ENCODE measurements at regions of chr2 and their contacts with region 1.

Region 1: GRCh38 chr2:42117923-42118753 is 51.0 kb upstream of the EML4 start:
- DNase-seq: no peak
- H3K4me3 Mint-ChIP-seq: peak overlapping the region; percentile 6
- H3K27ac Mint-ChIP-seq: peak overlapping the region; percentile 23
- H3K4me1 Mint-ChIP-seq: peaks cover 30% of the 10 kb centered on the region
- H3K27me3 Mint-ChIP-seq: peaks cover 2% of the 10 kb centered on the region

Region 2: DNA sequence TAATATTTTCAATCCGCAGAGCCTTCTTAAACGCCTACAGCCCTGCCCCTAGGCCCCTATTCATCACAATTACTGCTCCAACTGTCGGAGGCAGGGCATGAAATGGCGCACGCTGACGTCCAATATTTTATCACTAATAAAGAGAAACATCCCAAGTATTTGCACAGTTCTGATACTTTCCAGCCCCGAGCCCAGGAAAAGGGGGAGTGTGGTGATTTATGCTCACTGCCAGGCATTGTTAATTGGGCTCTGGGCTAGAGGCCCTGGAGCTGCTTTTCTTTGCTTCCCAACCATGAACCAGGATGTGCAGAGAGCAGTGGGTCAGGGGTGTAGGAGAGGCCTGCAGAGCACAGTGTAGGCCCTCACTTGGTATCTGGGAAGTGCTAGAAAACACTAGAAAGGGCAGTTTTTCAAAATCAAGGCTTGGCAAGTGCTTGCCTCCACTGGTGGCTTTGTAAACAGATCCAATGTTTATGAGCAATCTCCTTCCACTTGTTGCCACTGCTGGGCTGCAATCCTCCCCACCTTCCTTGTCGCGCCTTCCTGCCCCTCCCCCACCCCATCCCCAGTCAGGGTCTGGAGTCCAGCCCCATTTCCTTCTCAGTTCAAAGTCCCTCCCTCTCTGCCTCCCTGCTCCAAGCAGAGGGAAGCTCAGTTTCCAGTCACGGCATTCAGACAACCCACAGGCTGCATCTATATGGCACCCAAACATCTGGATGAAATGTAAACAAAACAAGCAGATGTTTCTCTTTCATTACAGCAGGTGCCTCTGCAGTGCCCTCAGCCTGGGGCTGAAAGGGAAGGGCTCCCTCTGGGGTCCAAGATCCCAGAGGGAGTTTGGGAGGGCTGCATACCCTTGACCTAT is 154.2 kb before region 1 on chr2:
- intact Hi-C with region 1: no loop called
- DNase-seq: no peak
- H3K4me3 Mint-ChIP-seq: no peak overlapping the region
- H3K27ac Mint-ChIP-seq: no peak overlapping the region
- H3K4me1 Mint-ChIP-seq: no peaks in the 10 kb centered on the region
- H3K27me3 Mint-ChIP-seq: peaks cover 11% of the 10 kb centered on the region

Region 3: GRCh38 chr2:42132966-42133641 is 15.0 kb after region 1 on chr2:
- intact Hi-C with region 1: loop called (anchors 2 kb)
- DNase-seq: peak; percentile 96
- H3K4me3 Mint-ChIP-seq: peak overlapping the region; percentile 78
- H3K27ac Mint-ChIP-seq: peak overlapping the region; percentile 91
- H3K4me1 Mint-ChIP-seq: peaks cover 76% of the 10 kb centered on the region
- H3K27me3 Mint-ChIP-seq: no peaks in the 10 kb centered on the region